ENCODE measurements at regions of chr7 and their contacts with region 1.

Region 1: DNA sequence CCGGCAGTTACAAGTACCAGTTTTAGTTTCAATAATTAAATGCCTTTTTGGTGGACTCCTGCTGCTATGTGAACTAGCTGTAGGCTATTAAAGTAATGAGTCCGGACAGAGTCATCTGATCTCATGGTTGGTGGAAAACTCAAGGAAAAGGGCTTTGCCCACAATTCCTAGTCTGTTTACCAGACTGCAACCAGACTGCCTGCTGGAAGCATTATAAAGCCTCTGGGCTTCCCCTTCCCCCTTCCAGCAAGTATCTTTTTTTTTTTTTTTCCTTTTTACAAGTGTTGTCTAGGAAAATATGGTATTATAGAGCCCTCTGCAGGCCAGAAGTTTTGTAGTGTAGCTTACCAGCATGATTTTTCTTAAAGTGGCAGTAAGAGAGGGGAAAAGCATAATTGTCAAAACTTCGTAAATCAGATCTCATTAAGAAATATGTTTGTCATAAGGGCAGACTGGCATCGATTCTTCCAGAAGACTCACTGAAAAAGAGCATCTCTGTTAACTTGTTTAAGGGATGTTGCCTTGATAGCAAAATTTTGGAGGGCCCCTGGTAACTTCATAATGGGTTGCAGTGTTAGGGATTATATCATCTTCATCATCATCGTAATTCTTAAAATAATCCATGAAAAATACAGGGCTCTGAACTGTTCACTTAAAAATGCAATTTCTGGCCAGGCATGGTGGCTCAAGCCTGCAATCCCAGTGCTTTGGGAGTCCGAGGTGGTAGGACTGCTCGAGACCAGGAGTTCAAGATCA is 181.3 kb downstream of the TAX1BP1 start:
- DNase-seq: peak; percentile 68
- ATAC-seq: peak; percentile 60
- H3K4me3 ChIP-seq: no peak overlapping the region
- H3K4me3 Mint-ChIP-seq: no peak overlapping the region
- H3K27ac ChIP-seq: no peak overlapping the region
- H3K27ac Mint-ChIP-seq: no peak overlapping the region
- H3K4me1 ChIP-seq: peaks cover 35 to 39% of the 10 kb centered on the region in 2 donors
- H3K4me1 Mint-ChIP-seq: peaks cover 67% of the 10 kb centered on the region
- H3K27me3 ChIP-seq: no peaks in the 10 kb centered on the region
- H3K27me3 Mint-ChIP-seq: no peaks in the 10 kb centered on the region
- CTCF ChIP-seq: peak; percentile 71

Region 2: GRCh38 chr7:27210441-27211083 is 710.7 kb before region 1 on chr7:
- CTCF ChIA-PET with region 1: interaction called, 35 read pairs
- POLR2A ChIA-PET with region 1: no interaction called
- intact Hi-C with region 1: loop called (anchors 1 kb)
- DNase-seq: peak; percentile 70
- ATAC-seq: peak; percentile 73
- H3K4me3 ChIP-seq: peak overlapping the region in 3 of 5 experiments; percentile 17 to 24 (median 20)
- H3K4me3 Mint-ChIP-seq: peak overlapping the region; percentile 51
- H3K27ac ChIP-seq: no peak overlapping the region
- H3K27ac Mint-ChIP-seq: no peak overlapping the region
- H3K4me1 ChIP-seq: peaks cover 21 to 31% of the 10 kb centered on the region in 2 donors
- H3K4me1 Mint-ChIP-seq: peaks cover 21% of the 10 kb centered on the region
- H3K27me3 ChIP-seq: peaks cover 0 to 95% (median 82%) of the 10 kb centered on the region in 4 experiments
- H3K27me3 Mint-ChIP-seq: peaks cover 86% of the 10 kb centered on the region
- CTCF ChIP-seq: peak; percentile 84

Region 3: DNA sequence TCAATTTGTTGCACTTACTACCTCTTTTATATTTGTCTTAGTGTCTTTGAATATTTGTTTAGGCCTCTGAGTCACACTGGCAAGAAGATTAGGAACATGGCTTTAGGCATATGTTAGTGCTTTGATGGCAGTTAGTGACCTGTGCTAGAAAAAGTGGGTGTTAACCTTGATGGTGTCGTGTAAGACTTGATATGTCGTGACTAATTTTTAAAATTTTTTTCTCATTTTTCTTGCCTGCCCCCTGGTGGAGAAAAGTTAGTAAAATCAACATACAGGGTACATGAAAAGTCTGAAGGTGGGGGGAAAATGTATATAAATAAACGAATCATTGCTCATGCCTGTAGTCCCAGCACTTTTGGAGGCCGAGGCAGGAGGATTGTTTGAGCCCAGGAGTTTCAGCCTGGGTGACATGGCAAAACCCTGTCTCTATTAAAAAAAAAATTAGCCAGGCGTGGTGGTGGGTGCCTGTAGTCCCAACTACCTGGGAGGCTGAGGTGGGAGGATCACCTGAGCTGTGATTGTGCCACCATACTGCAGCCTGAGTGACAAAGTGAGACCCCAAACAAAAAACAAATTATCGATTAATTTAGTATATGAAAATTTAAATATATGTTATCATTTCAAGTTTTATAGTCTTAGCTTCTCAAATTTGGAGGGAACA is 136.7 kb before region 1 on chr7:
- CTCF ChIA-PET with region 1: interaction called, 16 read pairs
- POLR2A ChIA-PET with region 1: no interaction called
- intact Hi-C with region 1: loop called (anchors 5 kb)
- DNase-seq: peak; percentile 59
- ATAC-seq: peak; percentile 28
- H3K4me3 ChIP-seq: no peak overlapping the region
- H3K4me3 Mint-ChIP-seq: no peak overlapping the region
- H3K27ac ChIP-seq: no peak overlapping the region
- H3K27ac Mint-ChIP-seq: no peak overlapping the region
- H3K4me1 ChIP-seq: no peaks in the 10 kb centered on the region
- H3K4me1 Mint-ChIP-seq: no peaks in the 10 kb centered on the region
- H3K27me3 ChIP-seq: no peaks in the 10 kb centered on the region
- H3K27me3 Mint-ChIP-seq: no peaks in the 10 kb centered on the region
- CTCF ChIP-seq: peak; percentile 80

Region 4: GRCh38 chr7:27933671-27934565 is 12.7 kb after region 1 on chr7:
- CTCF ChIA-PET with region 1: interaction called, 18 read pairs
- POLR2A ChIA-PET with region 1: no interaction called
- intact Hi-C with region 1: no loop called
- DNase-seq: no peak
- ATAC-seq: no peak
- H3K4me3 ChIP-seq: no peak overlapping the region
- H3K4me3 Mint-ChIP-seq: no peak overlapping the region
- H3K27ac ChIP-seq: no peak overlapping the region
- H3K27ac Mint-ChIP-seq: no peak overlapping the region
- H3K4me1 ChIP-seq: no peaks in the 10 kb centered on the region
- H3K4me1 Mint-ChIP-seq: peaks cover 3% of the 10 kb centered on the region
- H3K27me3 ChIP-seq: no peaks in the 10 kb centered on the region
- H3K27me3 Mint-ChIP-seq: no peaks in the 10 kb centered on the region
- CTCF ChIP-seq: peak; percentile 53

Measured in B cell (primary cell).